Activated T-helper 2 cell treated with anti-CD3 and anti-CD28 coated beads, Interferon-gamma antibody, Interleukin-2, Interleukin-4, amounts not matched to agents 10 μg/mL and 5 μg/mL and 100 μg/mL, durations not matched to agents 14 hours and 24 hours and 36 hours (primary cell): ENCODE measurements at regions of chrX and their contacts with region 1.

Region 1: GRCh38 chrX:153599192-153600031 is 473 bp upstream of the CCNQ start:
- DNase-seq: peak; percentile 83
- H3K4me3 Mint-ChIP-seq: peak overlapping the region; percentile 87
- H3K27ac Mint-ChIP-seq: peak overlapping the region; percentile 60
- H3K4me1 Mint-ChIP-seq: peaks cover 25% of the 10 kb centered on the region
- H3K27me3 Mint-ChIP-seq: no peaks in the 10 kb centered on the region

Region 2: DNA sequence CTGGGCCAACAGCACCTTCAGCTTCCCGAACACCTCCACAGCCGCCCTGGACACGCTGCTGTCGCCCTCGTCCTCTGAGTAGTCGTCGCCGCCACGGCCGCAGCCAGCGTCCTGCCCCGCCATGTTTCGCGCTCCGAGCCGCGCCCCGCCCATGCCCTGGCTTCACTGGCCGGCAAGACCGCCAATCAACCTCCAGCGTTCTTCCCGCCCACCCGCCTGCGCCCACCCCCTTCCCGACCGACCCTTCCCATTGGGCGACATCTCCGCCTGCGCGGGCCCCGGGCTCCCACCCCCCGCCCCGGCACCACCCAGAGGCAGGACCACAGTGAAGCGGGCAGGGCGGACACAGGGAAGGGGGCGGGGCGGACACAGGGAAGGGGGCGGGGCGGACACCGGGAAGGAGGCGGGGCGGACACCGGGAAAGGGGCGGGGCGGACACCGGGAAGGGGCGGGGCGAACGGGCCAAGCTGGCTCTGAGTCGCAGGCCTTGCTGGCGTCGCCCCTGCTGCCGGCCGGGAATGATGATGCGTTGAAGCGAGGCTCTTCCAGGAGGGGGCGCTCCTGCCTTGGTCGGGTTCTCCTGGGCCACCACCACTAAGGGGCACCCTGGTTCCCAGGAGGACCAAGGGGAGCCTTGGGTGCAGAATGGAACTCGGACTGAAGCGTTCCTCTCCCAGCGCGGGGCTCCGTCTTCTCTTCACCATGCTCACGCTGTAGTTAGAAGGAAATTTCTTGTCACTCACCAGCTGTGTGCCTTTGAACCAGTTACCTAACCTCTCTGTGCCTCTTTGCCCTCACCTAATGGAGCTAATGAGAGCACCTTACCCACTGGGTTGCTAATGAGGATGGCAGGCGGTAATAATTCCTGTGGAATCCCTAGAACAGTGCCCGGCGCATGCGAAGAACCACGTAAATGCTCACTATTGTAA is 128.7 kb before region 1 on chrX and contains the start of gene HAUS7:
- intact Hi-C with region 1: loop called (anchors 5 kb)
- DNase-seq: peak; percentile 81
- H3K4me3 Mint-ChIP-seq: peak within 1 kb of the TSS; percentile 84
- H3K27ac Mint-ChIP-seq: peak within 1 kb of the TSS; percentile 72
- H3K4me1 Mint-ChIP-seq: peaks cover 2% of the 10 kb centered on the region
- H3K27me3 Mint-ChIP-seq: no peaks in the 10 kb centered on the region
- total RNA-seq, gene HAUS7: 58.2 and 62.0 TPM in 2 replicates

Region 3: GRCh38 chrX:153662266-153662665 is 62.9 kb after region 1 on chrX:
- intact Hi-C with region 1: no loop called
- DNase-seq: peak; percentile 22
- H3K4me3 Mint-ChIP-seq: no peak overlapping the region
- H3K27ac Mint-ChIP-seq: no peak overlapping the region
- H3K4me1 Mint-ChIP-seq: no peaks in the 10 kb centered on the region
- H3K27me3 Mint-ChIP-seq: peaks cover 41% of the 10 kb centered on the region

Region 4: GRCh38 chrX:153909024-153909970 is 309.9 kb after region 1 on chrX:
- intact Hi-C with region 1: no loop called
- DNase-seq: no peak
- H3K4me3 Mint-ChIP-seq: no peak overlapping the region
- H3K27ac Mint-ChIP-seq: no peak overlapping the region
- H3K4me1 Mint-ChIP-seq: no peaks in the 10 kb centered on the region
- H3K27me3 Mint-ChIP-seq: no peaks in the 10 kb centered on the region

Region 5: DNA sequence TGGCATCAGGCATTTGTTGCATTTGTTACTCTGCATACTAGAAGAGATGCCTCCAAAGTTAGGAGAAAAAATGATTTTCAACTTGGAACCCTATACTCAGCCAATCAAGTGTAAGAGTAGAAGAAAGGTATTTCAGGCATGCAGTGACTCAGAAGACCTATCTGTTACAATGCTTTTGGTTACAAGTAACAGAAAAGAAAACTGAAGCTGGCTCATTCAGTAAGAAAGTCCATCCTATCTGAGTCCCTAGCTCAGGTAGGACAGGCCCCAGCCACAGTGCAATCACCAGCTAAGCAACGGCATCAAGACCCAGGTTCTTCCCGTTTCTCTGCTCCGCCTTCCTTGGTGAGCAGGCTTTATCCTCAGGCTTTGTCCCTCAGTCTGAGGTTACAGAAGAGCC is 474.8 kb after region 1 on chrX:
- intact Hi-C with region 1: no loop called
- DNase-seq: no peak
- H3K4me3 Mint-ChIP-seq: no peak overlapping the region
- H3K27ac Mint-ChIP-seq: no peak overlapping the region
- H3K4me1 Mint-ChIP-seq: peaks cover 22% of the 10 kb centered on the region
- H3K27me3 Mint-ChIP-seq: no peaks in the 10 kb centered on the region